MCF 10A (cell line): ENCODE measurements at regions of chr19 and their contacts with region 1.

Region 1: GRCh38 chr19:39435499-39436349 is at the start of gene RPS16:
- DNase-seq: peak; percentile 98
- H3K4me3 Mint-ChIP-seq: peak within 1 kb of the TSS; percentile 81
- H3K27ac Mint-ChIP-seq: peak within 1 kb of the TSS; percentile 95
- H3K4me1 Mint-ChIP-seq: peaks cover 8% of the 10 kb centered on the region
- H3K27me3 Mint-ChIP-seq: no peaks in the 10 kb centered on the region
- CTCF ChIP-seq: no peak
- total RNA-seq, gene RPS16: 2,837 and 2,909 TPM in 2 replicates

Region 2: GRCh38 chr19:38792250-38793111 is 643.2 kb before region 1 on chr19:
- CTCF ChIA-PET with region 1: no interaction called
- POLR2A ChIA-PET with region 1: no interaction called
- intact Hi-C with region 1: no loop called
- DNase-seq: no peak
- H3K4me3 Mint-ChIP-seq: peak overlapping the region; percentile 24
- H3K27ac Mint-ChIP-seq: peak overlapping the region; percentile 72
- H3K4me1 Mint-ChIP-seq: peaks cover 12% of the 10 kb centered on the region
- H3K27me3 Mint-ChIP-seq: no peaks in the 10 kb centered on the region
- CTCF ChIP-seq: no peak

Region 3: GRCh38 chr19:39341719-39342604 is 93.8 kb before region 1 on chr19 and contains the start of gene SAMD4B:
- CTCF ChIA-PET with region 1: no interaction called
- POLR2A ChIA-PET with region 1: interaction called, 14 read pairs
- intact Hi-C with region 1: no loop called
- DNase-seq: peak; percentile 98
- H3K4me3 Mint-ChIP-seq: peak within 1 kb of the TSS; percentile 100
- H3K27ac Mint-ChIP-seq: peak within 1 kb of the TSS; percentile 97
- H3K4me1 Mint-ChIP-seq: peaks cover 48% of the 10 kb centered on the region
- H3K27me3 Mint-ChIP-seq: no peaks in the 10 kb centered on the region
- CTCF ChIP-seq: peak; percentile 79
- total RNA-seq, gene SAMD4B: 65.4 and 94.2 TPM in 2 replicates

Region 4: DNA sequence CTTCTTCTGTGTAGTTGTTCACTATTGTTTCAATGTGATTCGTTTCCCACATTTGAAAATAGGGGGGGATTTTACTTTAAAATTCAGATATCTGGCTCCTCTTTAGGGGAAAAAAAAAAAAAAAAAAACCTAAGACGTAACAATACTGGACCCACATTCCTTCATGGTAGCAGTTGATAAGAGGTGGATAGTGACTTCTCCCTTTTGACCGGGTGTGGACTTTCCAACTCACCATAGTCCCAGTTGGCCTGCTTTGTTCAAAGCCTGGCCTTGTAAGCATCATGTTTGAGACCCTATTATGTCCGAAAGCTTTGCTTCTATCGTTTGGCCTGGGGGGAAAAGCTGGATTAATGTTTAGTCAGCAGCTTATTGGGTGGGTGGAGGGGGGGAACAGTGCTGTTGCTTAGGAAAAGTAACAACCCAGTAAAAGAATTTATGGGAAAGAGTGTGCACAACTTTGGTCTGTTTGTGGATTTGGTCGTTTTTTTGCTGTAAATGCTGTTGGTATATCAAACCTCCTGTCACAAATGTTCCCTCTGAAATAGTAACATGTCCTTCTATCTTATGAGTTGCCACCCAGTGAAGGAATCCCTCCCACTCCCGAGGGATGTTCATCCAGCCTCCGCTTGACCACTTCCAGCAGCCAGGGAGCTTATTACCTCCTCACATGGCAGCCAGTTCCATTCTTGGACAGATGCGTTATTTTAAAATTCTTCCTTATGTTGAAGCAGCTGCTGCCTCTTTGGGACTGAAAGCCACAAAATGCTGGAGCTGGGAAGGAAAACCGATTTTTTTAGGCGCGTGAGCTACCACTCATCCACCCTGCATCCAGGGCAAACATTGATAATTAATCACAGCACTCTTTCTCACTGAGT is 83.1 kb before region 1 on chr19:
- CTCF ChIA-PET with region 1: no interaction called
- POLR2A ChIA-PET with region 1: no interaction called
- intact Hi-C with region 1: no loop called
- DNase-seq: no peak
- H3K4me3 Mint-ChIP-seq: no peak overlapping the region
- H3K27ac Mint-ChIP-seq: no peak overlapping the region
- H3K4me1 Mint-ChIP-seq: peaks cover 9% of the 10 kb centered on the region
- H3K27me3 Mint-ChIP-seq: no peaks in the 10 kb centered on the region
- CTCF ChIP-seq: no peak

Region 5: DNA sequence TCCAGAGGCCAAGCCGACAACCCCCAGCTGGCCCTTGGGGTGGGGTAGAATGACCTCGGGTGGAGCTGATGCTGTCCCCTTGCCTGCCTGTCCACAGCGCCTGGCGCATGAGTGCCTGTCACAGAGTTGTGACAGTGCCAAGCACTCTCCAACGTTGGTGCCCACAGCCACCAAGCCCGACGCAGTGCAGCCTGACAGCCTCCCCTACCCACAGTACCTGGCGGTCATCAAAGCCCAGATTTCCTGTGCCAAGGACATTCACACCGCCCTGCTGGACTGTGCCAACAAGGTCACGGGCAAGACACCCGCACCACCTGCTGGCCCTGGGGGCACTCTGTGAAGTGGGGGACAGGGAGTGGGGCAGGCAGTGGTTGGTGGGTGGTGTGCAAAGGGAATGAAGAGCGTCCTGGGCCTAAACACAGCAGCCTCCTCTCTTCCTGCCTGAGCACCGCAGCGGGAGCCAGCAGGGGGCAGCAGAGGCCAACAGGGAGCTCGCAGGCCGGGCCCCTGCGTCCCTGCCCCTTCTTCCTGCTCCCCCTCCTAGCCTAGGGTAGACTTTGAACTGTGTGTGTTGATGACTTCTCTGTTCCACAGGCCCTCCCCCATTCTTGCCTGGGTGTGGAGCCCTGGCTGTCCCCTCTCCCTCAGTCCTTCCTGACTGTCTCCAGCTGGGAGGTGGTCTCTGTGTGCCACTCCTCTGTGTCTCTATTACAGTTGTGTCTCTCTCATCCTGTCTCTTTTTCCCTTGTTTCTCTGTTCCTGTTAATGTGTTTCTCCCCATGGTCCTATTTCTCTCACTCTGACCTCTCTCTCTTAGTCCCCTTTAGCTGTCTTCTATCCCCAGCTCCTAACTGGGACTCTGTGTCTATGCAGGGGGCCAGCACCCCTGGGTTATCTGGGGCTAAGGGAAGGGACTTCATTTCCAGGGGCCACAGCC is 38.1 kb before region 1 on chr19:
- CTCF ChIA-PET with region 1: interaction called, 9 read pairs
- POLR2A ChIA-PET with region 1: interaction called, 55 read pairs
- intact Hi-C with region 1: no loop called
- DNase-seq: peak; percentile 92
- H3K4me3 Mint-ChIP-seq: peak overlapping the region; percentile 10
- H3K27ac Mint-ChIP-seq: peak overlapping the region; percentile 92
- H3K4me1 Mint-ChIP-seq: peaks cover 40% of the 10 kb centered on the region
- H3K27me3 Mint-ChIP-seq: no peaks in the 10 kb centered on the region
- CTCF ChIP-seq: peak; percentile 98

Region 6: GRCh38 chr19:39412100-39412866 is 23.4 kb before region 1 on chr19 and contains the start of gene PLEKHG2:
- CTCF ChIA-PET with region 1: interaction called, 6 read pairs
- POLR2A ChIA-PET with region 1: interaction called, 63 read pairs
- intact Hi-C with region 1: loop called (anchors 1 kb)
- DNase-seq: peak; percentile 100
- H3K4me3 Mint-ChIP-seq: peak within 1 kb of the TSS; percentile 94
- H3K27ac Mint-ChIP-seq: peak within 1 kb of the TSS; percentile 92
- H3K4me1 Mint-ChIP-seq: peaks cover 26% of the 10 kb centered on the region
- H3K27me3 Mint-ChIP-seq: no peaks in the 10 kb centered on the region
- CTCF ChIP-seq: peak; percentile 94
- total RNA-seq, gene PLEKHG2: 19.2 and 19.6 TPM in 2 replicates

Region 7: DNA sequence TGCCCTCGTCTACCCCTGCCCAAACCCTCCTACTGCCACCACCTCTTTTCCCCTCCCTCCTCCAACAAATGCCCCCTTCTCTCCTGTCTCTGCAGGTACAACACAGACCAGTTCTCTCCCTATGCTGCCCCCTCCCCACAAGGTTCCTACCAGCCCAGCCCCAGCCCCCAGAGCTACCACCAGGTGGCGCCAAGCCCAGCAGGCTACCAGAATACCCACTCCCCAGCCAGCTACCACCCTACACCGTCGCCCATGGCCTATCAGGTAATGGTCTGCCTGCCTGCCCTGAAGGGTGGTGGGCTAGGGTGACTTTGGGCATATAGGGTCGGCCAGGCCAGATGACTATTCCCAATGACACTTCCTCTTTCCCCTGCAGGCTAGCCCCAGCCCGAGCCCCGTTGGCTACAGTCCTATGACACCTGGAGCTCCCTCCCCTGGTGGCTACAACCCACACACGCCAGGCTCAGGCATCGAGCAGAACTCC is 38.5 kb after region 1 on chr19:
- CTCF ChIA-PET with region 1: interaction called, 15 read pairs
- POLR2A ChIA-PET with region 1: interaction called, 3 read pairs
- intact Hi-C with region 1: no loop called
- DNase-seq: peak; percentile 46
- H3K4me3 Mint-ChIP-seq: no peak overlapping the region
- H3K27ac Mint-ChIP-seq: no peak overlapping the region
- H3K4me1 Mint-ChIP-seq: no peaks in the 10 kb centered on the region
- H3K27me3 Mint-ChIP-seq: no peaks in the 10 kb centered on the region
- CTCF ChIP-seq: peak; percentile 86

Region 8: GRCh38 chr19:39532233-39533002 is 96.7 kb after region 1 on chr19 and contains the start of gene EID2B:
- CTCF ChIA-PET with region 1: interaction called, 51 read pairs
- POLR2A ChIA-PET with region 1: interaction called, 21 read pairs
- intact Hi-C with region 1: loop called (anchors 1 kb)
- DNase-seq: peak; percentile 97
- H3K4me3 Mint-ChIP-seq: peak within 1 kb of the TSS; percentile 81
- H3K27ac Mint-ChIP-seq: peak within 1 kb of the TSS; percentile 79
- H3K4me1 Mint-ChIP-seq: peaks cover 5% of the 10 kb centered on the region
- H3K27me3 Mint-ChIP-seq: no peaks in the 10 kb centered on the region
- CTCF ChIP-seq: peak; percentile 98
- total RNA-seq, gene EID2B: 2.0 and 3.3 TPM in 2 replicates